ENCODE measurements at regions of chr6 and their contacts with region 1.

Region 1: DNA sequence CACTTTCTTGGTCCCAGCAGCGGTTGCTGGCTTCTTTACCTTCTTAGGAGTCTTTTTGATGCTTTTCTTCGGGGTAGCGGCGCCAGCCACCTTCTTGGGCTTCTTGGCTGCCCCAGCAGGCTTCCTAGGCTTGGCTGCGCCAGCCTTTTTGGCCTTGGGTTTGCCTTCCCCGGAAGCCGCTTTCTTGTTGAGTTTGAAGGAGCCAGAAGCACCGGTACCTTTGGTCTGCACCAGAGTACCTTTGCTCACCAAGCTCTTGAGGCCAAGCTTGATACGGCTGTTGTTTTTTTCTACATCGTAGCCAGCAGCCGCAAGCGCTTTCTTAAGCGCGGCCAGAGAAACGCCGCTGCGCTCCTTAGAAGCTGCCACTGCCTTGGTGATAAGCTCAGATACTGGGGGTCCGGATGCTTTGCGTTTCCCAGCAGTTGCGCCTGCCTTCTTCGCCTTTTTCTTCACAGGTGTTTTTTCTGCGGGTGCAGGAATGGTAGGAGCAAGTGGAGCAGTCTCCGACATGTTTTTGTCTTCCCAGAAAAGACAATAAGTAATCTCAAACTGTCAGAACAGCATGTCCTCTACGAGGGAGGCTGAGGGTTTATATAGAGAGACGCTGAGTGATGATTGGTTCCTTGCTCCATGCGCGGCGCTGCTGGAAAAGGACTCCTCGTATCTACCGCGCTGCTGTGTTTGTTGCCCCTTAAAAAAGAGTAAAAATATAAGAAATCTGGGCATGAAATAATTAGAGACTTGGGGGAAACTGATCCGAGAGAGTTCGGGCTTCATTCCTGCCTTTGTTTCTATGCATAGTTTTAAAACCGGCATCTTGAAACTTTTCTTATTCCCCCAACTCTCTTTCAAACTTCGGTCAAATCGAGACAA is 130.3 kb upstream of the BTN3A2 start:
- DNase-seq: peak; percentile 41 to 91 (median 86)
- ATAC-seq: peak; percentile 69
- H3K4me3 Mint-ChIP-seq: peak overlapping the region; percentile 91 to 99 (median 95)
- H3K27ac Mint-ChIP-seq: peak overlapping the region; percentile 95 to 100 (median 97)
- H3K4me1 Mint-ChIP-seq: peaks cover 12 to 37% (median 32%) of the 10 kb centered on the region in 4 donors
- H3K27me3 Mint-ChIP-seq: no peaks in the 10 kb centered on the region

Region 2: GRCh38 chr6:26103770-26104456 is 130.7 kb before region 1 on chr6:
- POLR2A ChIA-PET with region 1: interaction called, 10 read pairs
- DNase-seq: peak; percentile 71 to 97 (median 94)
- ATAC-seq: peak; percentile 91 to 92
- H3K4me3 Mint-ChIP-seq: peak overlapping the region; percentile 87 to 93 (median 89)
- H3K27ac Mint-ChIP-seq: peak overlapping the region; percentile 96 to 100 (median 98)
- H3K4me1 Mint-ChIP-seq: peaks cover 10 to 20% (median 14%) of the 10 kb centered on the region in 4 donors
- H3K27me3 Mint-ChIP-seq: peaks cover 0 to 4% (median 0%) of the 10 kb centered on the region in 5 donors

Region 3: DNA sequence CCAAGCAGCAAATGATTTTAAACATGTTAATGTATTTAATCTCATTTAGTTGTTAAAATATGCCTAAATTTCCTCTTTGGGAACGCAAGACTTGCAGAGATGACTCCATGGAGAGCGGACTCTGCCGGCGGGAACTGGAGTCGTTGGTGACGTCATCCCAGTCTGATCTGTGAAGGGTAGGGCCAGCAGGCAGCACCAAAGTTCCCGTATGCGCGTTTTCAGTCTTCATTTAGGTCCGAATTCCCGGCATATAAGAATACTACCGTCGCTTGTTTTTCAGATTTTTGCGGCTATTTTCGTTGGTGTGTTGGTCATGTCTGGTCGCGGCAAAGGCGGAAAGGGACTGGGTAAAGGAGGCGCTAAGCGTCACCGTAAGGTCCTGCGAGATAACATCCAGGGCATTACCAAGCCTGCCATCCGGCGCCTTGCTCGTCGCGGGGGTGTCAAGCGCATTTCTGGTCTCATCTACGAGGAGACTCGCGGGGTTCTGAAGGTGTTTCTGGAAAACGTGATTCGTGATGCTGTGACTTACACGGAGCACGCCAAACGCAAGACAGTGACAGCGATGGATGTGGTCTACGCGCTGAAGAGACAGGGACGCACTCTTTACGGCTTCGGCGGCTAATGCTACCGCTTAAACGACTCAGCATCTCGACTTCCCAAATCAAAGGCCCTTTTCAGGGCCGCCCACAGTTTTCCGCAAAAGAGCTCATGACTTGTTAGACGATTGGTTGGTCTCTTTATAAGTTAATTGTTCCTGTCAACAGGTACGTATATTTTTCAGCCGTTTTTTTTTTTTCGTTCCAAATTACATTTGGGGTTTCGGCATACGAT is 30.1 kb before region 1 on chr6:
- POLR2A ChIA-PET with region 1: interaction called, 360 read pairs
- DNase-seq: peak; percentile 69 to 97 (median 88)
- ATAC-seq: peak; percentile 68 to 71
- H3K4me3 Mint-ChIP-seq: no peak overlapping the region
- H3K27ac Mint-ChIP-seq: no peak overlapping the region
- H3K4me1 Mint-ChIP-seq: peaks cover 14 to 36% (median 26%) of the 10 kb centered on the region in 4 donors
- H3K27me3 Mint-ChIP-seq: peaks cover 0 to 4% (median 0%) of the 10 kb centered on the region in 5 donors

Region 4: GRCh38 chr6:26312501-26313390 is 78.1 kb after region 1 on chr6:
- POLR2A ChIA-PET with region 1: interaction called, 11 read pairs
- DNase-seq: peak; percentile 65 to 94 (median 86)
- ATAC-seq: peak; percentile 71 to 81
- H3K4me3 Mint-ChIP-seq: peak overlapping the region; percentile 92 to 97 (median 94)
- H3K27ac Mint-ChIP-seq: peak overlapping the region; percentile 74 to 100 (median 94)
- H3K4me1 Mint-ChIP-seq: peaks cover 20 to 47% (median 41%) of the 10 kb centered on the region in 4 donors
- H3K27me3 Mint-ChIP-seq: peaks cover 0 to 6% (median 0%) of the 10 kb centered on the region in 5 donors

Region 5: DNA sequence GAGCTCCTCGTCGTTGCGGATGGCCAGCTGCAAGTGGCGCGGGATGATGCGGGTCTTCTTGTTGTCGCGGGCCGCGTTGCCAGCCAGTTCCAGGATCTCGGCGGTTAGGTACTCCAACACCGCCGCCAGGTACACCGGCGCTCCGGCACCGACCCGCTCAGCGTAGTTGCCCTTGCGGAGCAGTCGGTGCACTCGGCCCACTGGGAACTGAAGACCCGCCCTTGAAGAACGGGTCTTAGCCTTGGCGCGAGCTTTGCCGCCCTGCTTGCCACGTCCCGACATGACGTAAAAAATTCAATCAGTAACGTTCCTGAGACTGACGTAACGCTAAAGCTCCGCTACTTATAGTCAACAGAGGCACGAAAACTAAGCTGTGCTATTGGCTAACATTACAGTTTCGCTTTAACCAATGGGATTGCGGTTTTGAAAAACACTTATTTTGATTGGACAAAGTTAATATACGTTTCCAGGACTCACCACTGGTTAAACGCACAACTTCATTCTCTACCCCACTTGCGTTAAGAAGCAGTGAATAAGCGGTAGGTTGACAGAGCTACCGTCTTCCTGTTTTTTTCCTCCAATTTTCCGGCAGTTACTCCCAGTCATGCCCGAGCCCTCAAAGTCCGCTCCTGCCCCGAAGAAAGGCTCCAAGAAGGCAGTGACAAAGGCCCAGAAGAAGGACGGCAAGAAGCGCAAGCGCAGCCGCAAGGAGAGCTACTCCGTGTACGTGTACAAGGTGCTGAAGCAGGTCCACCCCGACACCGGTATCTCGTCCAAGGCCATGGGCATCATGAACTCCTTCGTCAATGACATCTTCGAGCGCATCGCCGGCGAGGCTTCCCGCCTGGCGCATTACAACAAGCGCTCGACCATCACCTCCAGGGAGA is 1603.6 kb after region 1 on chr6:
- POLR2A ChIA-PET with region 1: interaction called, 37 read pairs
- DNase-seq: peak; percentile 63 to 95 (median 88)
- ATAC-seq: peak; percentile 78 to 81
- H3K4me3 Mint-ChIP-seq: no peak overlapping the region
- H3K27ac Mint-ChIP-seq: no peak overlapping the region
- H3K4me1 Mint-ChIP-seq: peaks cover 8 to 36% (median 18%) of the 10 kb centered on the region in 4 donors
- H3K27me3 Mint-ChIP-seq: peaks cover 0 to 8% (median 0%) of the 10 kb centered on the region in 5 donors